ENCODE measurements at regions of chr1 and their contacts with region 1.

Region 1: GRCh38 chr1:94186946-94187345 is 50.4 kb downstream of the ARHGAP29 start:
- DNase-seq: no peak
- ATAC-seq: no peak

Region 2: GRCh38 chr1:94209425-94209824 is 22.5 kb after region 1 on chr1:
- intact Hi-C with region 1: no loop called
- DNase-seq: no peak
- ATAC-seq: peak; percentile 72

Region 3: DNA sequence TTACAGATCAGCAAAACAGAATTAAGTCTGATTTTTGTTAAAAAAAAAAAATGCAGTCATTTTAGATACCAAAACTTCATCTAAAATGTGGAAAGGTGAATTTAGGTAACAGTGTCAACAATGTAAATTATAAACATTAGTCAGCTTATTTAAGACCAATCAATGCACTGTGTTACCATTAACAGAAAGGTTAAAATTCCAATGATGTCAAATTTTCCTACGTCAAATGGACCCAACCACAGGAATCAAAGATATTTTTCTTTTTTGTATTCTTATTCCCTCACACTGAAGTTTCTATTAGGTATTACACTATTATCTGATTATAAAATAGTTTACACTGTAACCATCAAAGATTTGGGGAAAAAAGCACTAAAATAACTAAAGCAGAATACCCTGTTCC is 44.0 kb after region 1 on chr1:
- intact Hi-C with region 1: loop called (anchors 5 kb)
- DNase-seq: no peak
- ATAC-seq: no peak